ENCODE measurements at regions of chr20 and their contacts with region 1.

Region 1: GRCh38 chr20:53915446-53916172 is 154.8 kb downstream of the BCAS1 start:
- DNase-seq: peak; percentile 99
- ATAC-seq: peak; percentile 98
- H3K4me3 Mint-ChIP-seq: peak overlapping the region; percentile 85
- H3K27ac Mint-ChIP-seq: peak overlapping the region; percentile 84
- H3K4me1 Mint-ChIP-seq: peaks cover 39% of the 10 kb centered on the region
- H3K27me3 Mint-ChIP-seq: no peaks in the 10 kb centered on the region

Region 2: DNA sequence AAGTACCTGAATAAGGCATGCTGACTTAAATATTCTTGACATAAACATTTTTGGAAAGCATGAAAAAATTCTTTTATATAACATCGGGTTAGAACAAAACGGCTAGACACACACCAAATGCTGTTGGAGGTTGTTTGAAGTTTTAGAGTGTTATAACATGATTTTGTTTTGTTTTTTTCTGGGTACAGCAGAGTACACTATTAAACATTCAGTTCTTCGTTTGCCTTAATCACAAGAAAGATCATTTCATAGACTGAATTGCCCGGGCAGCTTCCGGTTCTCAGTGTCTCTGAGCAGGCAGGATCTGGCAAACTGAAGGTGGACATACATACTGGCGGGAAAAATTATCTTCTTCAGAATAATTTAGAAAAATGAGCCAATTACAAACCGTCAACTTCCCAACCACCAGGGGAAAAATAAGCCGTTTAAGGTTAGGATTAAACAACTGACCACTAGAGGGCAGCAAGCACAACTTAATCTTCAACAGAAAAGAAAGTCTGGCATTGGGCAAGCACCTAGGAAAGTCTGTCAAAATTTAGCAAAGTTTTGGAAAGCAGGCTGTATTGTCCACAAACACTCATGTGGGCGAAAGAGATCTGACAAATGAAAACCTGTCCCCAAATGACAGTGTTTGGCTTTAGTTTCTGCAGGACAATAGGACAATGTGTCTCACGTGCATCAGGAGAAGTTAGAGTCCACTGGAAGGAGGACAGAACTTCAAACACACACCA is 337.0 kb before region 1 on chr20:
- CTCF ChIA-PET with region 1: interaction called, 18 read pairs
- POLR2A ChIA-PET with region 1: interaction called, 4 read pairs
- DNase-seq: peak; percentile 84
- ATAC-seq: peak; percentile 35
- H3K4me3 Mint-ChIP-seq: peak overlapping the region; percentile 80
- H3K27ac Mint-ChIP-seq: peak overlapping the region; percentile 81
- H3K4me1 Mint-ChIP-seq: peaks cover 87% of the 10 kb centered on the region
- H3K27me3 Mint-ChIP-seq: no peaks in the 10 kb centered on the region

Region 3: GRCh38 chr20:53708129-53708968 is 207.3 kb before region 1 on chr20:
- CTCF ChIA-PET with region 1: interaction called, 12 read pairs
- POLR2A ChIA-PET with region 1: interaction called, 6 read pairs
- DNase-seq: peak; percentile 68
- ATAC-seq: peak; percentile 66
- H3K4me3 Mint-ChIP-seq: peak overlapping the region; percentile 49
- H3K27ac Mint-ChIP-seq: peak overlapping the region; percentile 97
- H3K4me1 Mint-ChIP-seq: peaks cover 73% of the 10 kb centered on the region
- H3K27me3 Mint-ChIP-seq: no peaks in the 10 kb centered on the region

Region 4: DNA sequence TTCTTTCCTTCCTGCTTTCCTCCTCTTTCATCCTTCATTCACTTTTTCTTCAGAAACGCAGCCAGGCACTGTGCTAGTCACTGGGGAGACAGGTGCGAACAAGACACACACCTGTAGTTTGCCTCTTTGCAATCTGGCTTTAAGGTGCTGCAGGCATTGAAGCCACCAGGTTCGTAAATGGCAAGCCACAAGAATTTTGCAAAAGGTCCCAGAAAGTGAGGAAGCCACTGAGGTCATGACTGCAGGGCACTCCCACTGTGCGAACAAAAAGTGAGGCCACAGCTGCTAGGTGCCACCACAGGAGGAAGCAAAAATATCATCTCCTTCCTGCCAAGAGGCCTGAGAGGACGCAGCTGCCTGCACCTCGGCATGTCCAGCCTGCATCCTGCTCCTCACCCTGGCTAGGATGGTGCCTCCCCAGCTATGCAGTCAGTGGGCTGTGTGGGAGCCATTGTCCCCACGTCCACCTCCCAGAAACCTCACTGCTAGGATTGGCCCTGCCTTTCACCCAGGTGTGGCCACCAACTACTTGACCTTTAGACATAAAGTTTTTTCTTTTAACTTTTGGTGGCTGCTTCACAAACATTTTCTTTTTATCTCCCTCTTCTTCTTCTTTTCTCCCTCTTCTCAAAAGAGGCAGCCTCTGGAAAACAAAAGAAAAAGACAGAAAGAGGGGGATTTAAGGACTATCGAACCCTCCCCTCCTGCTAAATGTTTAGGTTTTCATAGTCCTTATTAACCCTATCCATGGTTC is 76.0 kb before region 1 on chr20:
- CTCF ChIA-PET with region 1: interaction called, 16 read pairs
- POLR2A ChIA-PET with region 1: interaction called, 7 read pairs
- DNase-seq: peak; percentile 88
- ATAC-seq: peak; percentile 59
- H3K4me3 Mint-ChIP-seq: peak overlapping the region; percentile 71
- H3K27ac Mint-ChIP-seq: peak overlapping the region; percentile 92
- H3K4me1 Mint-ChIP-seq: peaks cover 76% of the 10 kb centered on the region
- H3K27me3 Mint-ChIP-seq: no peaks in the 10 kb centered on the region

Region 5: GRCh38 chr20:53869466-53870258 is 45.9 kb before region 1 on chr20:
- CTCF ChIA-PET with region 1: interaction called, 75 read pairs
- POLR2A ChIA-PET with region 1: interaction called, 18 read pairs
- DNase-seq: peak; percentile 87
- ATAC-seq: peak; percentile 76
- H3K4me3 Mint-ChIP-seq: peak overlapping the region; percentile 34
- H3K27ac Mint-ChIP-seq: peak overlapping the region; percentile 76
- H3K4me1 Mint-ChIP-seq: peaks cover 86% of the 10 kb centered on the region
- H3K27me3 Mint-ChIP-seq: no peaks in the 10 kb centered on the region

Region 6: DNA sequence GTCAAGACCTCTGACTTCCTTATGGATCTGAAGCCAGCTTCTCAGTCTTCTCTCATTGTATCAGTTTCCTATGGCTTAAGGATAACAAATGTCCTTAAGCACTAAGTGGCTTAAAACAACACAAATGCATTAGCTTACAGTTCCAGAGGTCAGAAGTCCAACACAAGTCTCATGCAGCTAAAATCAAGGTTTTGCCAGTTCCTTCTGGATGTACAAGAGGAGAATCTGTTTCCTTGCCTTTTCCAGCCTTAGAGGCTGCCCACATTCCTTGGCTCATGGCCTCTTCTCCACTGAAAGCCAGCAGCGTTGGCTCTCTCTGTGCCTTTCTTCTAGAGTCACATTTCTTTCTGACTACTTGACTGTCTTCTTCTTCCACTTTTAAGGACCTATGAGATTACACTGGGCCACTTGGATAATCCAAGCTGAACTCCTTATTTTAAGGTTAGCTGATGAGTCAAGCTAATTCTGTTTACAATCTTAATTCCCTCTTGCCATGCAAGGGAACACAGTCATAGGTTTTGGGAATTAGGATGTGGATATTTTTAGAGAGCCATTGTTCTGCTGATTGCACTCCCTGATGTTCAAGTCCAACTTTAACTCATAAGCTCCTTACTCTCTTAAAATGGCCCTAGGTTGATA is 24.2 kb before region 1 on chr20:
- CTCF ChIA-PET with region 1: interaction called, 11 read pairs
- POLR2A ChIA-PET with region 1: interaction called, 3 read pairs
- DNase-seq: no peak
- ATAC-seq: no peak
- H3K4me3 Mint-ChIP-seq: no peak overlapping the region
- H3K27ac Mint-ChIP-seq: peak overlapping the region; percentile 37
- H3K4me1 Mint-ChIP-seq: peaks cover 72% of the 10 kb centered on the region
- H3K27me3 Mint-ChIP-seq: no peaks in the 10 kb centered on the region

Region 7: GRCh38 chr20:53934421-53935343 is 19.1 kb after region 1 on chr20:
- CTCF ChIA-PET with region 1: interaction called, 80 read pairs
- POLR2A ChIA-PET with region 1: interaction called, 4 read pairs
- DNase-seq: peak; percentile 40
- ATAC-seq: peak; percentile 61
- H3K4me3 Mint-ChIP-seq: peak overlapping the region; percentile 41
- H3K27ac Mint-ChIP-seq: peak overlapping the region; percentile 86
- H3K4me1 Mint-ChIP-seq: peaks cover 62% of the 10 kb centered on the region
- H3K27me3 Mint-ChIP-seq: no peaks in the 10 kb centered on the region

Region 8: DNA sequence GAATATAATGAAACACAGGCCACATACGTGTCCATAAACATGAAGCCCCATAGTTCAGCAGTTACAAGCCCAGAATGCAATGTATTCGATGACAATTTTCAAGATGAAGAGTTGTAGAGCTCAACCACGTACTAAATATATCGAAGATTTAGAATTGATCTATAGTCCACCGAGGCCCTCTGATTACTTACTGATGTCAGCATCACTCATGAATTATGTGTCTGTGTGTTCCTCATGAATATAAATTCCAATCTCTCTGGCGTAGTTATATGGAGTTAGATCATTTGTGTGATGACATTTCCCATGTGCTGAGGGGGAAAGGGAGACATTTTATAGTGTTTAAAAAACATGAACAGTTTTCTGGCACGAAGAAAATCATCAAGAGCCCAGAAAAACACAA is 389.8 kb after region 1 on chr20:
- CTCF ChIA-PET with region 1: no interaction called
- POLR2A ChIA-PET with region 1: no interaction called
- DNase-seq: no peak
- ATAC-seq: no peak
- H3K4me3 Mint-ChIP-seq: no peak overlapping the region
- H3K27ac Mint-ChIP-seq: no peak overlapping the region
- H3K4me1 Mint-ChIP-seq: no peaks in the 10 kb centered on the region
- H3K27me3 Mint-ChIP-seq: no peaks in the 10 kb centered on the region

Measured in activated CD8-positive, alpha-beta T cell treated with anti-CD3 and anti-CD28 coated beads, Interleukin-2, amount 10 ng/mL, durations not matched to agents 7 days and 5 days (primary cell).